ENCODE measurements at regions of chr1 and their contacts with region 1.

Region 1: GRCh38 chr1:160193091-160193819 is 2.9 kb downstream of the CASQ1 start:
- DNase-seq: peak; percentile 86
- H3K4me3 ChIP-seq: no peak overlapping the region
- H3K27ac ChIP-seq: no peak overlapping the region
- H3K4me1 ChIP-seq: peaks cover 5% of the 10 kb centered on the region
- H3K27me3 ChIP-seq: no peaks in the 10 kb centered on the region
- CTCF ChIP-seq: peak; percentile 90 to 91
- POLR2A ChIP-seq: no peak

Region 2: DNA sequence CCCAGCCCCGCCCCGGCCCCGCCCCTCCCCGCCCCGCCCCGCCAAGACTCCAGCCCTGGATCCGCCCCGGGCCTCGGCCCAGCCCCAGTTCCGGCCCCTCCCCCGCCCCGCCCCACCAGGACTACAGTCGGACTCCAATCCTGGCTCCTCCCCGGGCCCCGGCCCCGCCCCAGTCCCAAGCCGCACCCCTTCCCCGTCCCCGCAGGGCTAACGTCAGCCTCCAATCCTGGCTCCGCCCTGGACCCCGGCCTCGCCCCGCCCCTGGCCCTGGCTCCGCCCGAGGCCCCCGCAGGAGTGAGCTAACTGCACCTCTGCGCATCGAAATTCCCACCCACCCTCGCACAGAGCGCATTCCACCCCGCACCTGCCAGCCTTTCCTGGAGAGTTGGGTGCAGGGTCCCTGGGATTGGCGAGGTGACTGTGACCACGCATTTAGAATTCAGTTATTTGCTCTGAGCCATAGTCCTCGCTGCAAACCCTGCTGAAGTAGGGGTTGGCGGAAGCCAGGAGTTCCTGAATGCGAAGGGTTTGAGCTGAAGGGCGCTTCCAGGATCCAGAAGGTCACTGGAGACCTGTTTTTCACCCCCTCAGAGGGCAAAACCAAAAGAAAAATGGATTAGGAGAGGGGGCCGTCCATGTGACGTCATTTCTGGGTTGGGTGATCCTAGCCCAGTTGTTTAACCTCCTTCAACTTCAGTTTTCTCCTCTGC is 94.2 kb before region 1 on chr1:
- CTCF ChIA-PET with region 1: interaction called, 10 read pairs
- POLR2A ChIA-PET with region 1: no interaction called
- dilution Hi-C with region 1: no loop called
- intact Hi-C with region 1: loop called (anchors 1 kb)
- DNase-seq: peak; percentile 91
- H3K4me3 ChIP-seq: peak overlapping the region; percentile 63 to 82 (median 79)
- H3K27ac ChIP-seq: peak overlapping the region; percentile 36
- H3K4me1 ChIP-seq: peaks cover 7% of the 10 kb centered on the region
- H3K27me3 ChIP-seq: peaks cover 14 to 16% of the 10 kb centered on the region in 2 experiments
- CTCF ChIP-seq: no peak
- POLR2A ChIP-seq: no peak

Region 3: DNA sequence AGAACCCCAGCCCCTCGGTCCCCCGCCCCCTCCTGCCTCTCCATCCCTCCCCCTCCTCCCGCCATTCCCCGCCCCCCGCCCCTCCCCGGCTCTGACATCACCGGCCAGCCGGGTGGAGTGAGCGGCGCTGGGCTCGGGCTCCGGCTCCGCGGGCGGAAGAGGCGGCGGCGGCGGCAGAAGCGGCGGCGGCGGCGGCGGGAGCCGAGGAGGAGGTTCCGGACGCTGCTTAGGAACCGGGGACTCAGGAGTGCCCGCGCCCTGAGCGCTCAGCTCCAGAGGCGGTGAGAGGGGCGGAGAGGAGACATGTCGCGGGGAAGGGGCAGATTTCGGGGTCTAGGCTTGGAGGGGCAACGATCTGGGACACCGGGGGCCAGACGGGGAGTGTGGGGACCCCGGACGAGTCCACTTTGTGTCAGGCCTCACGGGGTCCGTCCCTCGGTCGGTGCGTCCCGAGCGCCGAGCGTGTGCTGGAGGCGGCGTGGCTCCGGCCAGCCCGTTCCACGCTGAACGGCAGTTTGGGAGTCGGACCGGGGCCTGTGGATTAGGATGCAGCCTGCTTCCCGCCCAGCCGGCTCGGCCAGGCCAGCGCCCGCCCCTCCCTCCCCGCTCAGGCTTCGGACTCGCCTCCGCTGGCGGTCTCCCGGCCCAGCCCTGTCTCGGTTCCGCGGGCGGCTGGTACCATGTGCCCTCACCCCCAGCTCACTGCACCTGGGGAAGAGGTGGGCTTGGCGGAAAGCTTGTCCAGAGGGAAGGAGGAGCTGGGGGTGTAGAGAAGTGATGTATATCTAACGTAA is 12.2 kb after region 1 on chr1 and contains the start of gene PEA15:
- CTCF ChIA-PET with region 1: interaction called, 183 read pairs
- POLR2A ChIA-PET with region 1: no interaction called
- dilution Hi-C with region 1: no loop called
- intact Hi-C with region 1: loop called (anchors 1 kb)
- DNase-seq: peak; percentile 54
- H3K4me3 ChIP-seq: peak within 1 kb of the TSS; percentile 55 to 81 (median 72)
- H3K27ac ChIP-seq: peak within 1 kb of the TSS; percentile 73
- H3K4me1 ChIP-seq: peaks cover 45% of the 10 kb centered on the region
- H3K27me3 ChIP-seq: no peaks in the 10 kb centered on the region
- CTCF ChIP-seq: no peak
- POLR2A ChIP-seq: no peak
- total RNA-seq, gene PEA15: 250 and 270 TPM in 2 replicates

Region 4: DNA sequence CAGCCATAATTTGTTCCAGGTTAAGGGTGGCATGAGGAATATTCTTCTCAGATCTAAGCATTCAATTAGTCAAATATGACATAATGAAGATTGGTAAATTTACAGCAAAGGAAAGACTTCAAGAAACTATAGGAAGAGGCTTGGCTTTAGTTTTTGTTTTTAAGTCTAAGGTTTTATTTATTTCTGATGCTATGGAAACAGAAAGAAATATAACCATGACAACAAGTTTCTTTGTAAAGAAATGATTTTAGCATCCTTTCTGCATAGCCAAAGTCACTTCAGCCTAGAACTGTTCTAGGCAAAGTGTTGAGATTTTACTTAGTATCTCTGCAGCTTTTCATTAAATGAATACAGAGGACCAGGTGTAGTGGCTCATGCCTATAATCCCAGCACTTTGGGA is 39.7 kb after region 1 on chr1:
- CTCF ChIA-PET with region 1: interaction called, 32 read pairs
- POLR2A ChIA-PET with region 1: no interaction called
- dilution Hi-C with region 1: no loop called
- intact Hi-C with region 1: no loop called
- DNase-seq: no peak
- H3K4me3 ChIP-seq: no peak overlapping the region
- H3K27ac ChIP-seq: no peak overlapping the region
- H3K4me1 ChIP-seq: no peaks in the 10 kb centered on the region
- H3K27me3 ChIP-seq: no peaks in the 10 kb centered on the region
- CTCF ChIP-seq: no peak
- POLR2A ChIP-seq: no peak

Region 5: DNA sequence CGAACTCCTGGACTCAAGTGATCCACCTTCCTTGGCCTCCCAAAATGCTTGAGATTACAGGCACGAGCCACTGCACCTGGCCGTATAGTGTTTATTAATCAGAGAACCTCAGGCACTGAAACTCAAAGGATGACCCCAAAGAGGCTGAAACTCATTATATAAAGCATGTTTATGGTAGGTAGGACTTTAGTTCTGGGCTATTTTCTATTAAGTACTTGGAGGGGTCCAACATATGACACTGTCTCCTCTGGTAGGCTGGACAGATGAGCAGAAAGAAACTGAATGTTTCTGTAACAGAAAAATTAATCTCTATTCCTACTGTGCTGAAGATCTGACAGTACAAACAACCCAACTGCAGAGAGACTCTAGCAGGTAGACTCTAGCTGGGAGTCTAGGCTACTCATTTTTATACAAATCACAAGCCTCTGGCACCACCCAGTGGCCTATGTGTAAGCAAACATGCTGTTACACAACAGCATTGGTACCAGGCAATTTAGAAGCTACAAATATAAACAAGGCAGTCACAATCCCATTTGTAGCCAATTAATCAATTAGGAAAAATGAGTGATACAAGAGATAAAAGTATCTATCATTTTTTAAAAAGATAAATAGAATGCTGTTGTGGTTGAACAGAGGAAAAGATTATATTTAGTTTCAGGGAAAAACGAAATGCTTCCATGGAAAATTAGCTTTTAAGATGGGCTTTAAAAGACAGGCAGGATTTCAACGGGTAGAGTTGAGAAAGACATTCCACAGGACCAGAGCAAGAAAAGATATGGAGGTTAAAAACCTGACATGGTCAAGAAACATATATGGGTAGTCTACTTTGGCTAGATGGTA is 58.7 kb after region 1 on chr1:
- CTCF ChIA-PET with region 1: interaction called, 205 read pairs
- POLR2A ChIA-PET with region 1: interaction called, 6 read pairs
- dilution Hi-C with region 1: no loop called
- intact Hi-C with region 1: loop called (anchors 1 kb)
- DNase-seq: peak; percentile 57
- H3K4me3 ChIP-seq: no peak overlapping the region
- H3K27ac ChIP-seq: no peak overlapping the region
- H3K4me1 ChIP-seq: peaks cover 5% of the 10 kb centered on the region
- H3K27me3 ChIP-seq: no peaks in the 10 kb centered on the region
- CTCF ChIP-seq: peak; percentile 49 to 64
- POLR2A ChIP-seq: no peak

Region 6: GRCh38 chr1:160284782-160285344 is 91.6 kb after region 1 on chr1 and contains the start of gene PEX19:
- CTCF ChIA-PET with region 1: interaction called, 281 read pairs
- POLR2A ChIA-PET with region 1: no interaction called
- dilution Hi-C with region 1: no loop called
- intact Hi-C with region 1: no loop called
- DNase-seq: peak; percentile 95
- H3K4me3 ChIP-seq: peak within 1 kb of the TSS; percentile 65 to 83 (median 72)
- H3K27ac ChIP-seq: peak within 1 kb of the TSS; percentile 45
- H3K4me1 ChIP-seq: peaks cover 9% of the 10 kb centered on the region
- H3K27me3 ChIP-seq: no peaks in the 10 kb centered on the region
- CTCF ChIP-seq: no peak
- POLR2A ChIP-seq: peak; percentile 87
- total RNA-seq, gene PEX19: 31.5 and 38.4 TPM in 2 replicates

Region 7: GRCh38 chr1:160376525-160377131 is 183.4 kb after region 1 on chr1:
- CTCF ChIA-PET with region 1: interaction called, 37 read pairs
- POLR2A ChIA-PET with region 1: no interaction called
- dilution Hi-C with region 1: no loop called
- intact Hi-C with region 1: loop called (anchors 1 kb)
- DNase-seq: peak; percentile 65
- H3K4me3 ChIP-seq: no peak overlapping the region
- H3K27ac ChIP-seq: no peak overlapping the region
- H3K4me1 ChIP-seq: no peaks in the 10 kb centered on the region
- H3K27me3 ChIP-seq: peaks cover 20 to 26% of the 10 kb centered on the region in 2 experiments
- CTCF ChIP-seq: peak; percentile 83 to 92
- POLR2A ChIP-seq: no peak

Measured in endothelial cell of umbilical vein (primary cell).